MCF 10A (cell line): ENCODE measurements at regions of chr17 and their contacts with region 1.

Region 1: GRCh38 chr17:70137451-70138230 is 31.7 kb upstream of the KCNJ2 start:
- DNase-seq: peak; percentile 96
- H3K4me3 Mint-ChIP-seq: peak overlapping the region; percentile 77
- H3K27ac Mint-ChIP-seq: peak overlapping the region; percentile 98
- H3K4me1 Mint-ChIP-seq: peaks cover 28% of the 10 kb centered on the region
- H3K27me3 Mint-ChIP-seq: no peaks in the 10 kb centered on the region
- CTCF ChIP-seq: no peak

Region 2: DNA sequence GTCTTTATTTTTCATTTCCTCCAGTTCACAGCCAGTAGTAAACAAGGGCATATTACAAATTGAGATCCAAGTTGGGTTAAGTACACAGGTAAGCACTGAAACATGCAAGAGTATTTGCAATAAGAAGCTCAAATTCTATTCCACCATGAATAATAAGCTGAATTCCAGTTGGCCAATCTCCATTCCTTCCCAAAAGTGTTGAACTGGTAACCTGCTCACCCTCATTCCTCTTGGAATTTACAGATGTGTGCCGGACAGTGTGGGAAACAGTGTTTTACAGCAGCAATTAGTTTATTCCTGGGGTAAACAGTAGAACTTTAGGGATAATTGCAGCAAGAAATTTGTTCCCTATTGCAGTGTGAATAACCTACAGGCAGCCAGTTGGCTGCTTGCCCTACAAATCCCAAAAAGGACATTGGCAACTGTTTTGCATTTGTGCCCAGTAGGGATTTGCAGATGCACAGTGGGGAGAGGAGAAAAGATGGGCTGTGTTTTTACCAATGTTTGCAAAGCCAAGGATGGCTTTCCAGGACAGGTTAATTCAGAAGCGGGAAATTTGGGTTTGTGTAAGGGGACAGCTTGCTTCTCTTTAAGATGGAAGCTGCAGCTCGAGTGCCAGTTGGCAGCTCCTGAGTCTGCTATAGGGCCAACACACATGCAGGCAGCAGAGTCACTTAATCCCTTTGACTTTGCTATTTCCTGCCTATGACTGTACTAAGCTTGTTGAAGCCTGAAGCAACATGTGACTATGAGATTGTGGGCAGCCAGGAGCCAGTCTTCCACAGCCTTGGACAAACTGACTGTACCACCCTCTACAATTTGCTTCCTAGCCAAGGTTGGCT is 404.2 kb before region 1 on chr17:
- CTCF ChIA-PET with region 1: no interaction called
- POLR2A ChIA-PET with region 1: interaction called, 35 read pairs
- intact Hi-C with region 1: no loop called
- DNase-seq: peak; percentile 93
- H3K4me3 Mint-ChIP-seq: peak overlapping the region; percentile 37
- H3K27ac Mint-ChIP-seq: peak overlapping the region; percentile 90
- H3K4me1 Mint-ChIP-seq: peaks cover 36% of the 10 kb centered on the region
- H3K27me3 Mint-ChIP-seq: no peaks in the 10 kb centered on the region
- CTCF ChIP-seq: no peak

Region 3: GRCh38 chr17:69761751-69762321 is 375.8 kb before region 1 on chr17:
- CTCF ChIA-PET with region 1: no interaction called
- POLR2A ChIA-PET with region 1: interaction called, 11 read pairs
- intact Hi-C with region 1: loop called (anchors 2 kb)
- DNase-seq: peak; percentile 93
- H3K4me3 Mint-ChIP-seq: peak overlapping the region; percentile 15
- H3K27ac Mint-ChIP-seq: peak overlapping the region; percentile 91
- H3K4me1 Mint-ChIP-seq: peaks cover 58% of the 10 kb centered on the region
- H3K27me3 Mint-ChIP-seq: no peaks in the 10 kb centered on the region
- CTCF ChIP-seq: no peak

Region 4: DNA sequence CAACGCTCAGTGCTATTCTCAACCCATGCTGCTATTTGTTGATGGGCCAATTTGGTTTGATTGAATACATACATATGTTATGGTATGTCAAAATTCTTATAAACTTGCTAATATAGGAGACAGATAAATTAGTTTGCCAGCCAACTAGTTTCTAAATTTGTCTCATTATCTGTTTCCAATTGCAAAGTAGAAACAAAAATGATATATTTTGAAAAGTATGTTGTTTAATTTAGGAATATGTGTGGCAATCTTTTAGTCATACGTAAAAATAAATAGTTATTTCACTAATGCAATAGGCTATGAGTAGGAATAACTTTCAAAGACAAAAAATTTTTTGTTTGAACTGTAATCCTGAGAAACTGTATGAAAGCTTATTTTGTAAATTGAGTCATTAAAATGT is 273.2 kb before region 1 on chr17:
- CTCF ChIA-PET with region 1: interaction called, 5 read pairs
- POLR2A ChIA-PET with region 1: interaction called, 6 read pairs
- intact Hi-C with region 1: loop called (anchors 5 kb)
- DNase-seq: no peak
- H3K4me3 Mint-ChIP-seq: no peak overlapping the region
- H3K27ac Mint-ChIP-seq: no peak overlapping the region
- H3K4me1 Mint-ChIP-seq: no peaks in the 10 kb centered on the region
- H3K27me3 Mint-ChIP-seq: no peaks in the 10 kb centered on the region
- CTCF ChIP-seq: no peak

Region 5: GRCh38 chr17:69874175-69874670 is 263.4 kb before region 1 on chr17:
- CTCF ChIA-PET with region 1: interaction called, 10 read pairs
- POLR2A ChIA-PET with region 1: interaction called, 8 read pairs
- intact Hi-C with region 1: no loop called
- DNase-seq: peak; percentile 71
- H3K4me3 Mint-ChIP-seq: no peak overlapping the region
- H3K27ac Mint-ChIP-seq: no peak overlapping the region
- H3K4me1 Mint-ChIP-seq: peaks cover 31% of the 10 kb centered on the region
- H3K27me3 Mint-ChIP-seq: no peaks in the 10 kb centered on the region
- CTCF ChIP-seq: no peak